ENCODE measurements at regions of chr15 and their contacts with region 1.

Region 1: GRCh38 chr15:33201491-33202231 is 7.1 kb upstream of the FMN1 start:
- DNase-seq: peak; percentile 87
- H3K4me3 Mint-ChIP-seq: peak overlapping the region; percentile 74
- H3K27ac Mint-ChIP-seq: peak overlapping the region; percentile 91
- H3K4me1 Mint-ChIP-seq: peaks cover 25% of the 10 kb centered on the region
- H3K27me3 Mint-ChIP-seq: peaks cover 17% of the 10 kb centered on the region

Region 2: GRCh38 chr15:32908135-32908801 is 293.4 kb before region 1 on chr15:
- intact Hi-C with region 1: no loop called
- DNase-seq: no peak
- H3K4me3 Mint-ChIP-seq: no peak overlapping the region
- H3K27ac Mint-ChIP-seq: no peak overlapping the region
- H3K4me1 Mint-ChIP-seq: no peaks in the 10 kb centered on the region
- H3K27me3 Mint-ChIP-seq: peaks cover 4% of the 10 kb centered on the region

Region 3: GRCh38 chr15:33104212-33104611 is 97.4 kb before region 1 on chr15:
- intact Hi-C with region 1: loop called (anchors 5 kb)
- DNase-seq: peak; percentile 65
- H3K4me3 Mint-ChIP-seq: no peak overlapping the region
- H3K27ac Mint-ChIP-seq: no peak overlapping the region
- H3K4me1 Mint-ChIP-seq: peaks cover 2% of the 10 kb centered on the region
- H3K27me3 Mint-ChIP-seq: peaks cover 10% of the 10 kb centered on the region

Region 4: GRCh38 chr15:33159726-33160453 is 41.8 kb before region 1 on chr15:
- intact Hi-C with region 1: loop called (anchors 5 kb)
- DNase-seq: no peak
- H3K4me3 Mint-ChIP-seq: no peak overlapping the region
- H3K27ac Mint-ChIP-seq: no peak overlapping the region
- H3K4me1 Mint-ChIP-seq: no peaks in the 10 kb centered on the region
- H3K27me3 Mint-ChIP-seq: peaks cover 16% of the 10 kb centered on the region